SK-N-SH (cell line): ENCODE measurements at regions of chr10 and their contacts with region 1.

Region 1: DNA sequence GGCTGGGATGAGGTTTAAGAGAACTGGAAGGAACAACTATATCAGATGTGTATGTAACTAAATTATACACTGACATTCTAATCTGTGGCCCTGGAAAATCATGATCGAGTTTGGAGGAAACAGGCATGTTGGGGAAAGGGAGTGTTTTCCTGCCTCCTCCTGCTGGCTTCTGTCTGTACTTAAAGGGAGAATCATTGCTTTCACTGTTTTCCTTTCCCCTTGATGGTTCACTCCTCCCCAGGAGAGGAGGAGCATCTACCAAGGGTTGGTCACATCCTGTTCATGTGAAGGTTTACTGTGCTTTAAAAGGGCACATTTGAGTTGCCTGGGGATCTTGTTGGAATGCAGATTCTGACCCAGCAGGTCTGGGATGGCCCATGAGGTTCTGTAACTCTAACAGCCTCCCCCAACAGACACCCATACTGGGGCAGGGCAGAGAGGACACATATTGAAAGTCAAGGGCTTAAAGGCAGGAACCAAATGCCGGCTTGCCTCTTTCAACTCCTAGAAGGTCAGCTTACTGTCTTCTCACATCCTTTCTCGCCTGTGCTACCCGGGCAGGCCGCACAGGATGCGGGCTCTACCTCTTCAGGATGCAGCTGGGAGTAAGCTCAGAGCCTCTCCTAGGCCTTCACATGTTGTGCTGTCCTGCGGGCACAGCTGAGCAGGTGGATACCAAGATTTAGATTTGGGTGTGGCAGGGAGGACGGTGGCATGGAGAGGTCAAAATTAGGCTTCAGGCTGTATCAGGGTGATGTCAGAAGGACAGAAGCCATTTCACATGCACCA is 694.8 kb downstream of the KCNMA1 start:
- DNase-seq: peak; percentile 37
- H3K4me3 ChIP-seq: no peak overlapping the region
- H3K27ac ChIP-seq: peak overlapping the region in 1 of 2 experiments; percentile 93; a peak in 2 of 4 replicates
- H3K4me1 ChIP-seq: peaks cover 0 to 42% of the 10 kb centered on the region in 2 experiments; a peak in 1 of 4 replicates
- H3K27me3 ChIP-seq: no peaks in the 10 kb centered on the region
- CTCF ChIP-seq: no peak
- EP300 ChIP-seq: peak in 1 of 2 experiments; percentile 78; a peak in 1 of 4 replicates
- RAD21 ChIP-seq: no peak; the same call in 1 of the 2 replicates

Region 2: GRCh38 chr10:76553263-76554032 is 389.4 kb before region 1 on chr10:
- CTCF ChIA-PET with region 1: no interaction called
- POLR2A ChIA-PET with region 1: interaction called, 13 read pairs
- DNase-seq: peak; percentile 65
- H3K4me3 ChIP-seq: no peak overlapping the region; a peak in 1 of 4 replicates
- H3K27ac ChIP-seq: peak overlapping the region in 1 of 2 experiments; percentile 100; a peak in 2 of 4 replicates
- H3K4me1 ChIP-seq: peaks cover 8 to 49% of the 10 kb centered on the region in 2 experiments; a peak in 3 of 4 replicates
- H3K27me3 ChIP-seq: no peaks in the 10 kb centered on the region
- CTCF ChIP-seq: no peak
- EP300 ChIP-seq: peak in 1 of 2 experiments; percentile 30; a peak in 1 of 4 replicates
- RAD21 ChIP-seq: no peak

Region 3: GRCh38 chr10:76922666-76923065 is 20.2 kb before region 1 on chr10:
- CTCF ChIA-PET with region 1: no interaction called
- POLR2A ChIA-PET with region 1: no interaction called
- DNase-seq: no peak
- H3K4me3 ChIP-seq: no peak overlapping the region
- H3K27ac ChIP-seq: peak overlapping the region in 1 of 2 experiments; percentile 47; a peak in 2 of 4 replicates
- H3K4me1 ChIP-seq: peaks cover 0 to 9% of the 10 kb centered on the region in 2 experiments; a peak in 2 of 4 replicates
- H3K27me3 ChIP-seq: no peaks in the 10 kb centered on the region
- CTCF ChIP-seq: no peak
- EP300 ChIP-seq: no peak
- RAD21 ChIP-seq: no peak

Region 4: GRCh38 chr10:76984559-76985443 is 42.0 kb after region 1 on chr10:
- CTCF ChIA-PET with region 1: interaction called, 12 read pairs
- POLR2A ChIA-PET with region 1: no interaction called
- DNase-seq: peak; percentile 57
- H3K4me3 ChIP-seq: peak overlapping the region in 1 of 2 experiments; percentile 17; a peak in 1 of 4 replicates
- H3K27ac ChIP-seq: peak overlapping the region in 1 of 2 experiments; percentile 90; a peak in 2 of 4 replicates
- H3K4me1 ChIP-seq: peaks cover 0 to 21% of the 10 kb centered on the region in 2 experiments; a peak in 2 of 4 replicates
- H3K27me3 ChIP-seq: no peaks in the 10 kb centered on the region
- CTCF ChIP-seq: peak; percentile 99
- EP300 ChIP-seq: peak in 1 of 2 experiments; percentile 44; a peak in 1 of 4 replicates
- RAD21 ChIP-seq: peak; percentile 95